ENCODE measurements at regions of chr18 and their contacts with region 1.

Region 1: GRCh38 chr18:49886891-49887764 is 73.8 kb upstream of the ACAA2 start:
- DNase-seq: peak in 1 of 2 experiments; percentile 54
- H3K4me3 ChIP-seq: no peak overlapping the region
- H3K27ac ChIP-seq: no peak overlapping the region
- H3K4me1 ChIP-seq: peaks cover 0 to 5% (median 2%) of the 10 kb centered on the region in 4 experiments; a peak in 2 of 7 replicates
- H3K27me3 ChIP-seq: no peaks in the 10 kb centered on the region; a peak in 1 of 7 replicates
- CTCF ChIP-seq: peak; percentile 42 to 44 (median 43)
- EP300 ChIP-seq: no peak
- POLR2A ChIP-seq: no peak
- RAD21 ChIP-seq: peak; percentile 51 to 67

Region 2: DNA sequence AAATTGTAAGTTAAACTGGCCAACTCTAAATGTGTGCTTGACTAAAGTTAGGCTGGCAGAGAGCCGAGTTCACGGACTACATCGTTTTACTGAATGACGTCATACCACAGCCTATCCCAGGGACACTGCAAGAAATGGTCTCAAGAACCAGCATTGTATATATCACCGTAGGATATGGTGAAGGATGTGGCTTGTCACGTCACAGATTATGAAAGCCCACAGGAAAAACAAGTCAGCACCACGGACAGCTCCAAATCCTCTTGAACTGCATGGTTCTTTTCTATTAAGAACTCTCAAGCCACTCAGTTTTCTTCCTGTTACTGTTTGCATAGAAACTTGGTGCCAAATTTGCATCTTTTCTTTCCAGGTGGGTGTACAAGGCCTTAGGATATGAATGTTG is 11.3 kb after region 1 on chr18:
- CTCF ChIA-PET with region 1: interaction called, 17 read pairs
- POLR2A ChIA-PET with region 1: no interaction called
- DNase-seq: peak in 1 of 2 experiments; percentile 73
- H3K4me3 ChIP-seq: no peak overlapping the region
- H3K27ac ChIP-seq: no peak overlapping the region
- H3K4me1 ChIP-seq: peaks cover 0 to 4% (median 0%) of the 10 kb centered on the region in 4 experiments; a peak in 1 of 7 replicates
- H3K27me3 ChIP-seq: no peaks in the 10 kb centered on the region
- CTCF ChIP-seq: no peak
- EP300 ChIP-seq: no peak
- POLR2A ChIP-seq: no peak
- RAD21 ChIP-seq: no peak

Region 3: GRCh38 chr18:50151926-50152325 is 264.8 kb after region 1 on chr18:
- CTCF ChIA-PET with region 1: no interaction called
- POLR2A ChIA-PET with region 1: no interaction called
- DNase-seq: no peak
- H3K4me3 ChIP-seq: no peak overlapping the region
- H3K27ac ChIP-seq: no peak overlapping the region
- H3K4me1 ChIP-seq: no peaks in the 10 kb centered on the region
- H3K27me3 ChIP-seq: no peaks in the 10 kb centered on the region
- CTCF ChIP-seq: no peak
- EP300 ChIP-seq: no peak
- POLR2A ChIP-seq: no peak
- RAD21 ChIP-seq: no peak

Measured in H1 (cell line).